ENCODE measurements at regions of chr5 and their contacts with region 1.

Region 1: GRCh38 chr5:113320273-113320780 is 114.5 kb downstream of the TSSK1B start:
- DNase-seq: no peak
- ATAC-seq: no peak
- H3K4me3 ChIP-seq: no peak overlapping the region
- H3K27ac ChIP-seq: peak overlapping the region in 1 of 12 donors; percentile 13
- H3K4me1 ChIP-seq: peaks cover 0 to 18% (median 5%) of the 10 kb centered on the region in 12 donors
- H3K27me3 ChIP-seq: no peaks in the 10 kb centered on the region
- CTCF ChIP-seq: no peak
- POLR2A ChIP-seq: no peak

Region 2: GRCh38 chr5:113050721-113051382 is 269.5 kb before region 1 on chr5:
- intact Hi-C with region 1: loop called in 1 of 10 experiments (anchors 5 kb)
- DNase-seq: peak in 1 of 5 donors; percentile 36
- ATAC-seq: peak; percentile 23 to 64 (median 57)
- H3K4me3 ChIP-seq: no peak overlapping the region
- H3K27ac ChIP-seq: peak overlapping the region in 6 of 12 donors; percentile 33 to 87 (median 46)
- H3K4me1 ChIP-seq: peaks cover 0 to 59% (median 11%) of the 10 kb centered on the region in 12 donors
- H3K27me3 ChIP-seq: no peaks in the 10 kb centered on the region
- CTCF ChIP-seq: no peak
- POLR2A ChIP-seq: no peak